ENCODE measurements at regions of chr16 and their contacts with region 1.

Region 1: DNA sequence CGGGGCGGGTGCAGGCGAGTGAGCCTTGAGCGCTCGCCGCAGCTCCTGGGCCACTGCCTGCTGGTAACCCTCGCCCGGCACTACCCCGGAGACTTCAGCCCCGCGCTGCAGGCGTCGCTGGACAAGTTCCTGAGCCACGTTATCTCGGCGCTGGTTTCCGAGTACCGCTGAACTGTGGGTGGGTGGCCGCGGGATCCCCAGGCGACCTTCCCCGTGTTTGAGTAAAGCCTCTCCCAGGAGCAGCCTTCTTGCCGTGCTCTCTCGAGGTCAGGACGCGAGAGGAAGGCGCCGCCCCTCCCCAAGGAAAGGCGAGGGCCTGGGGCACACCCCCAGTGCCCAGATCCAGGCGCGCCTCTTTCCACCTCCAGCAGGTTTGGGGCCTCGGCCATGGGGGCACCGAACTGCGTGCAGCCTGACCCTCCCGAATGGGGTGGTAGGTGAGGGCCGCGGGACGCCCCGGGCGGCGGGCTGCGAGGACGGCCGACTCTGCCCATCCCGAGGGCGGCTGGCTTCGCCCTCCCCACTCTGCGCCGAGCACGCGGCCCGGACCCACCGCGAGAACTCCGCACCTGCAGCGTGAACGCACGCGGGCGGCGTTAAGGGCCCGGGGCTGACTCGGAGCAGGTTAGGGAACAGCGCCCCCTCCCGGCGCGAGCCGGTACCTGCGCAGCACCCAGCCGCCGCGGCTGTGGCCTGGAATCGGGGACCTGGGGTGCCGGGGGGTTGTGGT is 844 bp downstream of the HBQ1 start:
- DNase-seq: peak; percentile 76
- ATAC-seq: peak; percentile 83
- H3K4me3 ChIP-seq: peak overlapping the region; percentile 35 to 73 (median 49); a peak in 5 of 6 replicates
- H3K27ac ChIP-seq: peak overlapping the region; percentile 43
- H3K4me1 ChIP-seq: peaks cover 23% of the 10 kb centered on the region
- H3K27me3 ChIP-seq: peaks cover 0 to 11% of the 10 kb centered on the region in 2 experiments; a peak in 3 of 5 replicates
- CTCF ChIP-seq: peak; percentile 96
- EP300 ChIP-seq: no peak
- POLR2A ChIP-seq: peak in 1 of 2 experiments; percentile 79; a peak in 2 of 4 replicates
- RAD21 ChIP-seq: peak; percentile 95

Region 2: GRCh38 chr16:65671-66137 is 115.4 kb before region 1 on chr16:
- CTCF ChIA-PET with region 1: interaction called, 6 read pairs
- POLR2A ChIA-PET with region 1: interaction called, 7 read pairs
- in situ Hi-C with region 1: no loop called
- intact Hi-C with region 1: loop called (anchors 1 kb)
- DNase-seq: peak; percentile 56
- ATAC-seq: peak; percentile 82
- H3K4me3 ChIP-seq: no peak overlapping the region
- H3K27ac ChIP-seq: no peak overlapping the region
- H3K4me1 ChIP-seq: peaks cover 46% of the 10 kb centered on the region
- H3K27me3 ChIP-seq: no peaks in the 10 kb centered on the region
- CTCF ChIP-seq: peak; percentile 99
- EP300 ChIP-seq: no peak
- POLR2A ChIP-seq: no peak
- RAD21 ChIP-seq: peak; percentile 99

Region 3: GRCh38 chr16:106623-107324 is 74.3 kb before region 1 on chr16:
- CTCF ChIA-PET with region 1: interaction called, 23 read pairs
- POLR2A ChIA-PET with region 1: interaction called, 5 read pairs
- in situ Hi-C with region 1: loop called (anchors 5 kb)
- intact Hi-C with region 1: no loop called
- DNase-seq: peak; percentile 66
- ATAC-seq: peak; percentile 82
- H3K4me3 ChIP-seq: no peak overlapping the region
- H3K27ac ChIP-seq: no peak overlapping the region
- H3K4me1 ChIP-seq: no peaks in the 10 kb centered on the region
- H3K27me3 ChIP-seq: no peaks in the 10 kb centered on the region
- CTCF ChIP-seq: peak; percentile 87
- EP300 ChIP-seq: no peak
- POLR2A ChIP-seq: no peak
- RAD21 ChIP-seq: peak; percentile 45; the same call in 1 of the 2 replicates

Region 4: GRCh38 chr16:117379-118365 is 63.4 kb before region 1 on chr16:
- CTCF ChIA-PET with region 1: interaction called, 17 read pairs
- POLR2A ChIA-PET with region 1: no interaction called
- in situ Hi-C with region 1: no loop called
- intact Hi-C with region 1: no loop called
- DNase-seq: peak; percentile 48
- ATAC-seq: peak; percentile 88
- H3K4me3 ChIP-seq: no peak overlapping the region
- H3K27ac ChIP-seq: no peak overlapping the region
- H3K4me1 ChIP-seq: peaks cover 11% of the 10 kb centered on the region
- H3K27me3 ChIP-seq: no peaks in the 10 kb centered on the region
- CTCF ChIP-seq: peak; percentile 83
- EP300 ChIP-seq: no peak
- POLR2A ChIP-seq: no peak
- RAD21 ChIP-seq: peak; percentile 77

Region 5: DNA sequence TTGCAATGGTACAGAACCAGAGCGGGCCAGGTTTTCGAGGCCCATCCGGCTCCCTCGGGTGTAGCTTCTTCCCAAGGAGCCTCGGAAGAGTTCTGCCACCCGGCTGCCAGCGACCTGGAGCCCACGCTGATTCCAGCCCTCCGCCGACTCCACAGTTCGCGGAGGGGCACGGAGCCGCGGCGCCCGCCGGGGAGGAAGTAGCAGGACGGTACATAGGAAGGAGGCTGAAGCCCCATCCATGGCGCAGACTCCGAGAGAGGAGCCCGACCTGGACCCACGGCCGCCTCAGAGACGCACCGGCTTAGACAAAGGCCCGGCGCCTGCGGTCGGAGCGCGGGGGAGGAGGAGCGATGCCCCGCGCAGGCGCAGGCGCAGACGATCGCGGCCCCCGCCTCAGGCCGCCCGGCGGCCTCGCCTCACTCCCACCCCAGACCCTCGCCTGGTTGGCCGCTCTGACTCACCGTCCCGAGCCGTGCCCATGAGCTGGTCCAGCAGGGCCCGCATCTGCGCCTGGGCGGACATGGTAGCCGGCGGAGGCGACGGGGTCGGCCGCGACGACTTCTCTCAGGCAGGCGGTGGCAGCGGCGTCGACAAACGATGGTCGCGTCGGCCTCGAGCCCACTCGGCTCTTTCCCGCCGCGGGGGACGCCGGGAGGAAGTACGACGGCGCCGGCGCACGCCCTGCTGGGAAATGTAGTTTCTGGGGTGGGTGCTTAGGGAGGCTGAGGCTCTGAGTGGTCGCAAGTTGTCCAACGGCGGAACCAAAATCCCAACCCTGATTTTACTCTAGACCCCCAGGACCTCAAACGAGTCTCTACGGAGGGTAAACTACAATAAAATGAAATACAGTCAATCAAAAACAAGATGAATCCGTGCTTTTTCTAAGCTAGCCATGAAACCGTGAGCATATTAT is 48.0 kb after region 1 on chr16 and contains the start of gene LUC7L:
- CTCF ChIA-PET with region 1: no interaction called
- POLR2A ChIA-PET with region 1: no interaction called
- in situ Hi-C with region 1: no loop called
- intact Hi-C with region 1: loop called (anchors 2 kb)
- DNase-seq: peak; percentile 79
- ATAC-seq: peak; percentile 96
- H3K4me3 ChIP-seq: peak within 1 kb of the TSS; percentile 91 to 99 (median 96)
- H3K27ac ChIP-seq: peak within 1 kb of the TSS; percentile 94
- H3K4me1 ChIP-seq: peaks cover 32% of the 10 kb centered on the region
- H3K27me3 ChIP-seq: no peaks in the 10 kb centered on the region; a peak in 1 of 5 replicates
- CTCF ChIP-seq: no peak
- EP300 ChIP-seq: peak in 1 of 2 experiments; percentile 30; a peak in 1 of 4 replicates
- POLR2A ChIP-seq: peak; percentile 85 to 97
- RAD21 ChIP-seq: peak; percentile 61
- total RNA-seq, gene LUC7L: 37.3 and 56.9 TPM in 2 replicates

Region 6: GRCh38 chr16:239953-240287 is 58.8 kb after region 1 on chr16:
- CTCF ChIA-PET with region 1: no interaction called
- POLR2A ChIA-PET with region 1: no interaction called
- in situ Hi-C with region 1: no loop called
- intact Hi-C with region 1: no loop called
- DNase-seq: peak; percentile 39
- ATAC-seq: peak; percentile 10; the same call in 1 of the 3 replicates
- H3K4me3 ChIP-seq: no peak overlapping the region
- H3K27ac ChIP-seq: no peak overlapping the region
- H3K4me1 ChIP-seq: peaks cover 24% of the 10 kb centered on the region
- H3K27me3 ChIP-seq: no peaks in the 10 kb centered on the region; a peak in 1 of 5 replicates
- CTCF ChIP-seq: no peak
- EP300 ChIP-seq: no peak
- POLR2A ChIP-seq: no peak
- RAD21 ChIP-seq: no peak

Measured in HepG2 (cell line).